Stomach (tissue), 19 donors: ENCODE measurements at regions of chr14 and their contacts with region 1.

Region 1: GRCh38 chr14:64671591-64671990 is 32.6 kb upstream of the PLEKHG3 start:
- DNase-seq: peak in 1 of 2 donors; percentile 89
- H3K4me3 ChIP-seq: no peak overlapping the region
- H3K27ac ChIP-seq: no peak overlapping the region
- H3K4me1 ChIP-seq: peaks cover 0 to 13% (median 3%) of the 10 kb centered on the region in 4 donors
- H3K27me3 ChIP-seq: no peaks in the 10 kb centered on the region
- CTCF ChIP-seq: peak in 5 of 7 experiments; percentile 47 to 73 (median 55)
- EP300 ChIP-seq: no peak
- POLR2A ChIP-seq: no peak

Region 2: DNA sequence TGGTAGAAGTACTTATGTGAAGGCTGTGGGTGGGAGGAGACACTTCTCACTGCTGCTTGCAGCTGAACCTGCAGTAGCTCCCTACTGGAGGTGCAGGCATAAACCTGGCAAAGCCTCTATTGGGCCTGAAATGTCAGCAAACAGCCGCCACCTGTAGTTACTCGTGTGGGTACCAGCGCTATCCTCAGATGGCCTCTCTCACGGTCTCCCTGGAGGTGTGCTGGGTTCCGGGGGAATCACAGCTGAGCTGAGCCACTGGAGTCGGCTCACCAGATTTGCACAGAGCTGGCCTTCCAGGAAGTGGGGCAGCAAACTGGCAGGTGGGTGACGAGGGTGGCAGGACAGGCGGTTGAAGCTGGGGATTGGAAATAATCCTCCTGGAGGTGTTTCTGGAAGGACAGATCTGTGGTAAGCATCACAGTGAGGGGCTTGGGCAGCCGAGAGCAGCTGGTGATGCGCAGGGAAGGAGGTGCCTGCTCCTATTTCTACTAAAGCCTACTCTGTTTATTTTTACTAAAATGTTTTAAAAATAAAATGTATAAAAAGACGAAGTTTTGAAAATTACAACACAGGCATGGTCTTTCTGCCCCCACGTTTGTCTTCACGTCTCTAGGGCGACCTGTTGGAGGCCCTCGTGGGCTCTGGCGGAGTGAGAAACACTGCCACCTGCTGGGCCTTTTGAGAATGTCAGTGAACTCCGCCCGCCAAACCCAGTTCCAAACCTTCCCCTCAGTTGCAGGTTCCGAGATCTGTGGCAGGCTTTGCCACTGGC is 35.2 kb before region 1 on chr14:
- intact Hi-C with region 1: no loop called
- DNase-seq: peak; percentile 77 to 89
- H3K4me3 ChIP-seq: no peak overlapping the region
- H3K27ac ChIP-seq: no peak overlapping the region
- H3K4me1 ChIP-seq: peaks cover 0 to 13% (median 7%) of the 10 kb centered on the region in 4 donors
- H3K27me3 ChIP-seq: no peaks in the 10 kb centered on the region
- CTCF ChIP-seq: peak in 5 of 7 experiments; percentile 63 to 92 (median 87)
- EP300 ChIP-seq: no peak
- POLR2A ChIP-seq: no peak

Region 3: GRCh38 chr14:64753346-64753745 is 81.8 kb after region 1 on chr14:
- intact Hi-C with region 1: no loop called
- DNase-seq: no peak
- H3K4me3 ChIP-seq: no peak overlapping the region
- H3K27ac ChIP-seq: no peak overlapping the region
- H3K4me1 ChIP-seq: peaks cover 13 to 18% (median 15%) of the 10 kb centered on the region in 4 donors
- H3K27me3 ChIP-seq: peaks cover 0 to 9% (median 0%) of the 10 kb centered on the region in 3 donors
- CTCF ChIP-seq: no peak
- EP300 ChIP-seq: no peak
- POLR2A ChIP-seq: no peak

Region 4: GRCh38 chr14:64764641-64765520 is 93.3 kb after region 1 on chr14:
- intact Hi-C with region 1: loop called (anchors 5 kb)
- DNase-seq: peak; percentile 77 to 94
- H3K4me3 ChIP-seq: peak overlapping the region; percentile 27 to 39 (median 32)
- H3K27ac ChIP-seq: peak overlapping the region in 3 of 5 donors; percentile 30 to 79 (median 32)
- H3K4me1 ChIP-seq: peaks cover 19 to 49% (median 36%) of the 10 kb centered on the region in 4 donors
- H3K27me3 ChIP-seq: no peaks in the 10 kb centered on the region
- CTCF ChIP-seq: peak in 5 of 7 experiments; percentile 85 to 97 (median 90)
- EP300 ChIP-seq: no peak
- POLR2A ChIP-seq: no peak

Region 5: GRCh38 chr14:64899958-64900357 is 228.4 kb after region 1 on chr14:
- intact Hi-C with region 1: loop called (anchors 10 kb)
- DNase-seq: no peak
- H3K4me3 ChIP-seq: no peak overlapping the region
- H3K27ac ChIP-seq: no peak overlapping the region
- H3K4me1 ChIP-seq: no peaks in the 10 kb centered on the region
- H3K27me3 ChIP-seq: no peaks in the 10 kb centered on the region
- CTCF ChIP-seq: no peak
- EP300 ChIP-seq: no peak
- POLR2A ChIP-seq: no peak